ENCODE measurements at regions of chr2 and their contacts with region 1.

Region 1: DNA sequence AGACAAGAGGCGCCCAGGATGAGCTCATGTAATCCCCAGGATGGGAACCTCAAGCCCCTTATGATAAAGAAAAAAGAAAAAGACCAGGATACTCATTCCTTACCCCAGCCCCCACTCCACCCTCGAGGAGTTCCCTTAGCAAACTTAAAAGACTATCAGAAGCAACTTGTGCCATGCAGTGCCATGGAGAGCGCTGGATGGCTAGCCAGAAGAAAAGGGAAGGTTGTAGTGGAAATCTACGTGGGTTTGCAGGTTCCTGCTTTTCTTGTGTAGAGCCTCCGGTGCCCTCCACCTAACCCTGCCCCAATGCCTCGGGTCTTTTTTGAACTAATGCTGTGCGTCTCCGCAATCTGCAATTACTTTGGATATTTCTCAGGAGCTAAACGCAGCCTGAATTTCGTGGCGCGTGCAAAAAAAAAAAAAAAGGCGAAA is 16.2 kb upstream of the BCL11A start:
- DNase-seq: no peak
- ATAC-seq: no peak
- H3K4me3 ChIP-seq: peak overlapping the region in 3 of 4 donors; percentile 1 to 32 (median 17)
- H3K27ac ChIP-seq: no peak overlapping the region
- H3K4me1 ChIP-seq: peaks cover 0 to 4% of the 10 kb centered on the region in 2 donors
- H3K27me3 ChIP-seq: peaks cover 41 to 68% (median 66%) of the 10 kb centered on the region in 3 donors
- CTCF ChIP-seq: no peak
- POLR2A ChIP-seq: no peak

Region 2: DNA sequence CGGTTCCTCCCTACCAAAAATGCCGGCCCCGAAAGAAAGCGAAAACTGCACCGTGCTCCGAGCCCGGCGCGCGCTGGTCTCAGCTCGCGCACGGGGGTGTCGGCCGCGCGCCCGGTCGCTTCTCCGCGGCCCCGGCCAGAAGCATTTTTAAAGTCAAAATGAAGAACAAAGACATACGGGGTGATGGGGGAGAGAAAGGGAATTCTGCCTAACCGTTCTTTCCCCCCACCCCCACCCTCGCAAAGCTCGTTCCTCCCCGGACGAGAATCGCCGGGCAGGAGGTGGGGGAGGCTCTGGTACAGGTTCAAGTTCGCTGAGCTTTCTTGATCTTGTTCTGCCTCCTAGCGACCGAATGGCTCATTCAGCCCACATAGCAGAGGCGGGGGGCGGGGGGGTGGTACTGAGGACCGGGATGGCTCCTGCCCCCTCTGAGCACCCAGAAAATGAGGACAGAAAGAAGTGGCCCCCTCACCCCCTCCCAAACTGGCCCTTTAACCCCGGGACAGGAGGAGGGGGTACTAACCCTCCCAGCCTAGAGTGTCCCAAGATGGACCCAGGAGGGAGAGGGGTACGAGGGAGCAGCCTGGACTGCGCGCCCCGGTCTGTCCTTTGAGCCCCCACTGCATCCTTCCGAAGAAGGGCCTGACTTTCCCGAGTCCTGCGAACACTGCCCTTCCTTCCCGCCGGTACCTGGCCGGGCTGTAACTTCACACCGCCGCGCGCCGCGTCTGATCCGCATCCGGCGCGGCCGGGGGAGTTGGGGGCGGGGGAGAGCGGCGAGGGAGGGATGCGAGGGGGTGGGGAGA is 19.3 kb before region 1 on chr2:
- in situ Hi-C with region 1: no loop called
- intact Hi-C with region 1: no loop called
- DNase-seq: peak in 1 of 2 donors; percentile 42
- ATAC-seq: peak; percentile 77 to 82
- H3K4me3 ChIP-seq: peak overlapping the region; percentile 63 to 79 (median 68)
- H3K27ac ChIP-seq: no peak overlapping the region
- H3K4me1 ChIP-seq: peaks cover 36 to 51% of the 10 kb centered on the region in 2 donors
- H3K27me3 ChIP-seq: peaks cover 66 to 94% (median 94%) of the 10 kb centered on the region in 3 donors
- CTCF ChIP-seq: peak in 3 of 5 experiments; percentile 13 to 51 (median 46)
- POLR2A ChIP-seq: no peak

Region 3: DNA sequence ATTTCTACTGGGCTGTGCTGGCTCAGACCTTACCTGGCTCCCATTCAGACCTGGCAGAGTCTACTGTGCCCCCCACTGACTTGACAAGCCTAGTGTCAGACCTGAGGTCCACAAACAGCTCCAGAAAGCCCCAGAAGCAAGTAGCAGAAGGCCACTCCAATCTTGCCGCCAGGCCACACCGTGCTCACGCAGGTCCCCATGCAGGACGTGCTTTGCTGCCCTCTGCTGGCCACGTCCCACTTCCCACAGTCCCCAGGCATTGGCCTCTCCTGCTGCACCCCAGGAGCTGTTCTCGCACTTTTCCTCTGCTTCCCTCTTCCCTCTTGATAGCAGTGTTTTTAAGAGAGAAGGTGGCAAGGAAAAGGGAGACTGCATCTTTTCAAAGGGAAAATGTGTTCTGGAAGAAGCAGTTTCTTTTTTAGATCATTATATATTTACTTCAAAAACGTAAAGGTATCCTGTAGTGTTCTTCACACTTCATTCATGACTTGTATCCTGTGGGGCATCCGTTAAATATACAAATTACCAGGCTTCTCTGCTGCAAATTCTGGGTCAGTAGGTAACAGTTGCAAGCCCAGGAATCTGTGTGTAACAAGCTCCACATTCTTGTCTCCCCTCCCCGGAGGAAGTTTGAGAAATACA is 104.9 kb after region 1 on chr2:
- in situ Hi-C with region 1: no loop called
- intact Hi-C with region 1: loop called (anchors 10 kb)
- DNase-seq: peak; percentile 51 to 58
- ATAC-seq: peak; percentile 83 to 85
- H3K4me3 ChIP-seq: no peak overlapping the region
- H3K27ac ChIP-seq: no peak overlapping the region
- H3K4me1 ChIP-seq: no peaks in the 10 kb centered on the region
- H3K27me3 ChIP-seq: peaks cover 0 to 5% (median 3%) of the 10 kb centered on the region in 3 donors
- CTCF ChIP-seq: peak; percentile 32 to 89 (median 67)
- POLR2A ChIP-seq: no peak

Measured in gastrocnemius medialis (tissue), 4 donors.